PC-3 (cell line): ENCODE measurements at regions of chr11 and their contacts with region 1.

Region 1: DNA sequence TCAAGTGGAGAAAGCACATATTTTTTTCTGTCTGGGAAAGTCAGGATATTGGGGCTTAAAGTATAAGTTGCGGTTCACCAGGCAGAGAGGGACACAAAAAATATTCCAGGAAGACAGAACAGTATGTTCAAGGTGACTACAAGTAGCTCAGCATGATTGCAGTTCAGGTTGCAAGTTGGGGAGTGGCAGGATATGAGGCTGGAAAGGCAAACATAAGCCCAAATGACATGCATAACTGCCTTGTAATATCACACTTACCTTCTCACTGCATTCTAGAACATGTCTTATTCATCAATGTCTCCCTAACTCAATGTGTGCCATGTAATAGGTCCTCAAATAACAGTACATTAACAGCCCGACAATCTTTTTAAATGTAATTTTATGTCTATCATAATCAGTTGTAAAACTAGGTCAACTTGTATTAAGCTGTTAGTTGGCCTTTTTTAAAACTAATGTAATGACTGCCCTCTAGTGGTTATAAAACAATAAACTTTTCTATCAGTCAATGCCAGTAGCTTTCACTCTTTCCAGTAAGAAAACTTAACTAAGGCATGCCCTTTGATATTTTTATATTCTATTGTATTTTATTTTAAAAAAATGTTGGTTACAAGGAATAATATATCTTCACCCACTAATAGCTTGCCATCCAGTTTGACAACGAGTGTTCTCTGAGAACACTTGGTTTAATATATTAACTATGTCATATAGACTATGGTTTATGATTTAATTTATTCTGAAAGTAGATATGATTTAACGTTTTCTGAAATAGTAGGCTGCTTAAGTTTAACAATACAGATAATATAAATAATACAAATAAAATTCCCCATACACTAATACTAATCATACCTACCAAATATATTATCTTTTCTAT is 39.4 kb upstream of the CFAP300 start:
- DNase-seq: peak; percentile 96
- ATAC-seq: peak; percentile 75
- H3K4me3 ChIP-seq: peak overlapping the region; percentile 41
- H3K27ac ChIP-seq: peak overlapping the region; percentile 90
- H3K4me1 ChIP-seq: peaks cover 61% of the 10 kb centered on the region
- H3K27me3 ChIP-seq: no peaks in the 10 kb centered on the region
- CTCF ChIP-seq: peak; percentile 85

Region 2: DNA sequence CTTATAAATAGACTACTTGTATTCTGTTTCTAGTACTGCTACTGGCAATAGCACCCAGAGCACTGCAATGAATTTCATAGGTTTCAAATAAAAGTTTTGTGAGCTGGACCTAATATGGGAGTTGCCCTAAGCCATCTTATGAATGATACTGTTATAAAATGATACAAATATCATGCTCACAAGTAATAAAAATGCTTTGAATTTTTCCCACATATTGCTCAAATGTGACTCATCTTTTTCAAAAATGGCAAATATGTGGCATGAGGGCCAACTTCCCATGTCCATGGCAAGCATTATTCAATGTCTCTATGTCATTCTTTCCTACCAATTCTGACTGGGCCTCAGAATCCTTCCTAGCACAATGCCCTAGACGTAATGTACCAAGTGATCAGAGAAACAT is 561.6 kb before region 1 on chr11:
- CTCF ChIA-PET with region 1: no interaction called
- POLR2A ChIA-PET with region 1: interaction called, 5 read pairs
- intact Hi-C with region 1: loop called (anchors 2 kb)
- DNase-seq: peak; percentile 94
- ATAC-seq: peak; percentile 88
- H3K4me3 ChIP-seq: peak overlapping the region; percentile 0; the same call in 1 of the 2 replicates
- H3K27ac ChIP-seq: peak overlapping the region; percentile 79
- H3K4me1 ChIP-seq: peaks cover 41% of the 10 kb centered on the region
- H3K27me3 ChIP-seq: no peaks in the 10 kb centered on the region
- CTCF ChIP-seq: no peak

Region 3: GRCh38 chr11:101759771-101760450 is 247.9 kb before region 1 on chr11:
- CTCF ChIA-PET with region 1: interaction called, 8 read pairs
- POLR2A ChIA-PET with region 1: no interaction called
- intact Hi-C with region 1: loop called (anchors 1 kb)
- DNase-seq: peak; percentile 87
- ATAC-seq: peak; percentile 77
- H3K4me3 ChIP-seq: no peak overlapping the region
- H3K27ac ChIP-seq: peak overlapping the region; percentile 33
- H3K4me1 ChIP-seq: peaks cover 32% of the 10 kb centered on the region
- H3K27me3 ChIP-seq: no peaks in the 10 kb centered on the region
- CTCF ChIP-seq: peak; percentile 83

Region 4: DNA sequence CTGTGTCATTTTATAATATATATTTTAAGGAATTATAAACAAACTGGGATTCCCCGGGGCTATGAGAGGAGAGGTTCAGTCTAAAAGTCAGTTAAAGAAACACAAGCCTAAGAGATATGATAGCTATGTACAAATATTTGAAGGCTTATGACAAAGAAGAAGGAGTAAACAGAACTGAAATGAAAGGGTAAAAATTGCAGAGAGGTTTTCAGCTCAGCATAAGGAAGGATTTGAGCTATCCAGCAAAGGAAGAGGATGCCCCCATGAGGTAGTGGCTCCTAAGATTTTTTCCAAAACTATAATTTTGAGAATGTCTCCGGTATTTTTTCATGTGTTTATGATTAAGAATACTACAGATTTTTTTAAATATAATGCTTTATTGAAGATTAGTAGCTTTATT is 33.5 kb before region 1 on chr11:
- CTCF ChIA-PET with region 1: interaction called, 9 read pairs
- POLR2A ChIA-PET with region 1: interaction called, 3 read pairs
- intact Hi-C with region 1: loop called (anchors 2 kb)
- DNase-seq: peak; percentile 52
- ATAC-seq: peak; percentile 97
- H3K4me3 ChIP-seq: no peak overlapping the region
- H3K27ac ChIP-seq: no peak overlapping the region
- H3K4me1 ChIP-seq: 0 out of 2 replicates have a peak, but pooled peaks cover 5% of the 10 kb centered on the region
- H3K27me3 ChIP-seq: no peaks in the 10 kb centered on the region
- CTCF ChIP-seq: peak; percentile 61

Region 5: DNA sequence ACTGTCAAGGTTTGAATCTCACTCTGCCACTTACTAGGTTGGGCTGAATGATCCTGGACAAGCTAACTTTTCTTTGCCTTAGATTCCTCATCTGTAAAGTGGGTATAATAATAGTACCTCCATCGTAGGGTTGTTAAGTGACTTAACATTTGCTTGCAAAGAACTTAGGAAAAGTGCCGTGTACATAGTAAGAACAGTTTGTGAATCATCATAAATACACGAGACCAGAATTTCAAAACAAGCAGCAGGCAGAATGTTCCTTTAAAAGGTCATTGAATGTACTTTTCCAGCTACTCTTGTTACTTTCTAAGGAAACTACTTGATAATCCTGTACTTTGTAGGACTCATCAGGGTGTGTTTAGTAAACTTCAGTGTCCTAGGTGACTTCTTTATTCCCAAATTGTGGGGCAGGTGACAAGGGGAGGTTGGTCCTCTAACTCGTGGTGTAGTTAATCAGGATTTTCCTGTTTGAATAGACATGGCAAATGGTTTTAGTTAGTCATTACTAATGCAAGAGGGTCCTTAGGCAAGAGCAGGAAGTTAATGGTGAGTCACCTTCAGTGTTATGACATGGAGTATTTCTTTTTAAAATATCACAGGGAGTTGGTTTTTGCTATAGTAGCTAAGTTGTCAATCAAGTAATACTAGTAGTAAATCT is 170.3 kb after region 1 on chr11:
- CTCF ChIA-PET with region 1: no interaction called
- POLR2A ChIA-PET with region 1: interaction called, 4 read pairs
- intact Hi-C with region 1: loop called (anchors 1 kb)
- DNase-seq: peak; percentile 99
- ATAC-seq: peak; percentile 90
- H3K4me3 ChIP-seq: peak overlapping the region; percentile 26; the same call in 1 of the 2 replicates
- H3K27ac ChIP-seq: peak overlapping the region; percentile 80
- H3K4me1 ChIP-seq: peaks cover 27% of the 10 kb centered on the region
- H3K27me3 ChIP-seq: no peaks in the 10 kb centered on the region
- CTCF ChIP-seq: no peak

Region 6: GRCh38 chr11:102268329-102269193 is 260.8 kb after region 1 on chr11:
- CTCF ChIA-PET with region 1: interaction called, 14 read pairs
- POLR2A ChIA-PET with region 1: interaction called, 3 read pairs
- intact Hi-C with region 1: loop called (anchors 2 kb)
- DNase-seq: peak; percentile 98
- ATAC-seq: peak; percentile 97
- H3K4me3 ChIP-seq: peak overlapping the region; percentile 85
- H3K27ac ChIP-seq: peak overlapping the region; percentile 65
- H3K4me1 ChIP-seq: peaks cover 33% of the 10 kb centered on the region
- H3K27me3 ChIP-seq: no peaks in the 10 kb centered on the region
- CTCF ChIP-seq: peak; percentile 73